Dendritic cell treated with granulocyte-macrophage colony-stimulating factor and Interleukin-4, amounts not matched to agents 40 ng/mL and 50 ng/mL, for 4 days (primary cell): ENCODE measurements at regions of chr3 and their contacts with region 1.

Region 1: GRCh38 chr3:20160230-20160629 is 25.8 kb downstream of the SGO1 start:
- H3K4me3 Mint-ChIP-seq: no peak overlapping the region
- H3K27ac Mint-ChIP-seq: peak overlapping the region; percentile 58
- H3K4me1 Mint-ChIP-seq: peaks cover 14% of the 10 kb centered on the region
- H3K27me3 Mint-ChIP-seq: no peaks in the 10 kb centered on the region

Region 2: DNA sequence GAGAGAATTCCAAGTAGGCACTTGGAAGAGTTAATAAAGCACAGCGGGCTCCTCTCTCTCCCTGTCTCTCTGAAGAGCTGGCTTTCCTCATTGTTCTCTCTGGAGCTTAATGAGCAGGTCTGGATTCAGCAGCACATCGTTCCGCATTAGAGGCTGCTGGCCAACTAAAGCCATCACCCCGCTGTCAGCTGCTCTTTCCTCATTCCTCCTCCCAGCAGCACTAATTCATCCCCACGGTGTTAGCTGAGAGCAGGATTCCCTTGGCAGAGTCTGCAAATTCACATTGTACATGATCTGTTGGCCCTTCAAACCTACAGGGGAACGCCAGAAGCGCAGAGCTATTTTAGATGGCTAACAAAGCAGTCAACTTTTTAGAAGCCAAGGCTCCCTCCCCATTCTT is 18.4 kb before region 1 on chr3:
- intact Hi-C with region 1: loop called (anchors 1 kb)
- H3K4me3 Mint-ChIP-seq: no peak overlapping the region
- H3K27ac Mint-ChIP-seq: no peak overlapping the region
- H3K4me1 Mint-ChIP-seq: peaks cover 15% of the 10 kb centered on the region
- H3K27me3 Mint-ChIP-seq: no peaks in the 10 kb centered on the region

Region 3: DNA sequence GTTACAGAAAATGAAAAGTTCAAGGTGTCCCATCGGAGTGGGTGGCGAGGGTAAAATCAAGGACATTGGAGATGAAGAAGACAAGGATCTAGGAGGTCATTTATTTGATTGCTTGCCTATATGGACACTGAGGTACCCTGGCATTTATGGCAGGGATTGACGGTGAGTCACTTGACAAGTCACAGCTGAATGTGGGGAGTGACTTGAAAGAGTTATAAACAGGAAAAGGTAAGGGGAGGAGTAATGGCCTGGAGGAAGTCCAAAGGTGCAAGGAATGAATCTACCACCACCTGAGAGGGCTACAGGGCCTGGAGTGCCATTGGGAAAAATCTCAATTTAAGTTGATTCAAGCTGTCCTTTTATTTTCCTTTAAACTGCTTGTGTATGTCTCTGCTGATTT is 37.5 kb after region 1 on chr3:
- intact Hi-C with region 1: no loop called
- H3K4me3 Mint-ChIP-seq: no peak overlapping the region
- H3K27ac Mint-ChIP-seq: no peak overlapping the region
- H3K4me1 Mint-ChIP-seq: peaks cover 5% of the 10 kb centered on the region
- H3K27me3 Mint-ChIP-seq: no peaks in the 10 kb centered on the region

Region 4: DNA sequence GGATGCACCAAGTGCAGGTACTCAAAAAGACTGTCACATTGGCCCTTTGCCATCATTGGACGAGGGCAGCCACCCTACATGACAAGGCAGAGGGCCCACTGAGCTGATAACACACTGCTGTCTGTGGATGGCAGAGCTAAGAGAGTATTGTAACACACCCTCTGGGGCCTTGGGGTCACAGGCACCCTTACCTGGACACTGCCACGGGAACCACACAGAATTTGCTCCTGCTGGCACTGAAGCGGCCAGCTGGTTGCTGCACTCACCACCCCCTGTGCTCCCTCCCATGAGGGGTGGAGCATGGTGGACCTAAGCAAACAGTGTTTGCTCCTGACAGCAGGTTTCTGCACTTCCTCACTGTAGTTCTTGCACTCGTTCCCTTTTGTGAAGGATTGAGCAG is 234.0 kb after region 1 on chr3:
- intact Hi-C with region 1: no loop called
- H3K4me3 Mint-ChIP-seq: no peak overlapping the region
- H3K27ac Mint-ChIP-seq: no peak overlapping the region
- H3K4me1 Mint-ChIP-seq: no peaks in the 10 kb centered on the region
- H3K27me3 Mint-ChIP-seq: no peaks in the 10 kb centered on the region